Heart left ventricle (tissue), 16 donors: ENCODE measurements at regions of chr19 and their contacts with region 1.

Region 1: DNA sequence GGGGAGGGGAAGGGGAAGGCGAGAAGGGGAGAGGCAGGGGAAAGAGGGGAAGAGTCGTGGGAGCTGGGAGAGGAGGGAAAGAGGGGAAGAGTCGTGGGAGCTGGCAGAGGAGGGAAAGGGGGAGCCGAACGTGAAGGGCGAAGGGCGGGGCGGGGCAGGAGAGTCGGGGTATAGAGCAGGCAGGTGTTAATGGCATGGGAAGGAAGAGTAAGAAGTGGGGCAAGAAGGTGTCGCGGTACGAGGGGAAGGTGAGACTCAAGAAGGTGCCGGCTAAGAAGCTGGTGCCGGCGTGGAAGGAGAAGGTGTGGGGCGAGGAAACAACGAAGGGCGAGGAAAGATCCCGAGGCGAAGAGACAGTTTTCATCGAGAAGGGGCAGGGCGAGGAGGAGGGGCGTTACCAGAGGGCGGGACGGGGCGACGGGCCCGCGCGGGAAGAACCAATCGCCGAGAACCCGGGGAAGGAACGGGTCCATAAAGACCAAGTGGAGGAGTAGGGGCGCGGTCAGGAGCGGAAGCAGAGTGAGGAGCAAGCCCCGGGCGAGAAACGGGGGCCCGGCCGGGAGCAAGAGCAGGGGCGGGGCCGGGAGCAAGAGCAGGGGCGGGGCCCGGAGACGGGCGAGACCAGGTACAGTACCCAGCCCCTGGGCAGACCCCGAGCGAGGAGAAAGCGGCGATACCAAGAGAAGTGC is 463 bp downstream of the CATSPERG start:
- DNase-seq: peak; percentile 94 to 98 (median 97)
- ATAC-seq: peak; percentile 91 to 94 (median 92)
- H3K4me3 ChIP-seq: peak overlapping the region; percentile 35 to 94 (median 74)
- H3K27ac ChIP-seq: peak overlapping the region; percentile 85 to 98 (median 93)
- H3K4me1 ChIP-seq: peaks cover 0 to 12% (median 8%) of the 10 kb centered on the region in 12 donors
- H3K27me3 ChIP-seq: no peaks in the 10 kb centered on the region
- CTCF ChIP-seq: no peak
- POLR2A ChIP-seq: peak in 1 of 2 donors; percentile 36

Region 2: GRCh38 chr19:37906869-37907734 is 429.0 kb before region 1 on chr19 and contains the start of gene SIPA1L3:
- intact Hi-C with region 1: loop called in 7 of 10 experiments (anchors 5 to 10 kb)
- DNase-seq: peak; percentile 94 to 97 (median 95)
- ATAC-seq: peak; percentile 97 to 99 (median 99)
- H3K4me3 ChIP-seq: peak within 1 kb of the TSS; percentile 76 to 98 (median 88)
- H3K27ac ChIP-seq: peak within 1 kb of the TSS in 11 of 12 donors; percentile 47 to 81 (median 76)
- H3K4me1 ChIP-seq: peaks cover 0 to 19% (median 12%) of the 10 kb centered on the region in 12 donors
- H3K27me3 ChIP-seq: no peaks in the 10 kb centered on the region
- CTCF ChIP-seq: peak in 2 of 12 donors; percentile 18 to 25
- POLR2A ChIP-seq: peak in 1 of 2 donors; percentile 86
- total RNA-seq, gene SIPA1L3: 6.3 to 22.9 (median 9.4) TPM

Region 3: GRCh38 chr19:38142176-38143035 is 193.7 kb before region 1 on chr19:
- intact Hi-C with region 1: loop called in 4 of 10 experiments (anchors 5 to 10 kb)
- DNase-seq: peak; percentile 49 to 77 (median 63)
- ATAC-seq: peak; percentile 70 to 86 (median 74)
- H3K4me3 ChIP-seq: no peak overlapping the region
- H3K27ac ChIP-seq: no peak overlapping the region
- H3K4me1 ChIP-seq: no peaks in the 10 kb centered on the region
- H3K27me3 ChIP-seq: no peaks in the 10 kb centered on the region
- CTCF ChIP-seq: peak; percentile 48 to 75 (median 68)
- POLR2A ChIP-seq: no peak

Region 4: GRCh38 chr19:38239816-38240215 is 96.3 kb before region 1 on chr19:
- intact Hi-C with region 1: loop called in 9 of 10 experiments (anchors 1 to 5 kb)
- DNase-seq: no peak
- ATAC-seq: no peak
- H3K4me3 ChIP-seq: no peak overlapping the region
- H3K27ac ChIP-seq: peak overlapping the region in 2 of 12 donors; percentile 34 to 38
- H3K4me1 ChIP-seq: peaks cover 0 to 10% (median 5%) of the 10 kb centered on the region in 12 donors
- H3K27me3 ChIP-seq: no peaks in the 10 kb centered on the region
- CTCF ChIP-seq: no peak
- POLR2A ChIP-seq: no peak

Region 5: DNA sequence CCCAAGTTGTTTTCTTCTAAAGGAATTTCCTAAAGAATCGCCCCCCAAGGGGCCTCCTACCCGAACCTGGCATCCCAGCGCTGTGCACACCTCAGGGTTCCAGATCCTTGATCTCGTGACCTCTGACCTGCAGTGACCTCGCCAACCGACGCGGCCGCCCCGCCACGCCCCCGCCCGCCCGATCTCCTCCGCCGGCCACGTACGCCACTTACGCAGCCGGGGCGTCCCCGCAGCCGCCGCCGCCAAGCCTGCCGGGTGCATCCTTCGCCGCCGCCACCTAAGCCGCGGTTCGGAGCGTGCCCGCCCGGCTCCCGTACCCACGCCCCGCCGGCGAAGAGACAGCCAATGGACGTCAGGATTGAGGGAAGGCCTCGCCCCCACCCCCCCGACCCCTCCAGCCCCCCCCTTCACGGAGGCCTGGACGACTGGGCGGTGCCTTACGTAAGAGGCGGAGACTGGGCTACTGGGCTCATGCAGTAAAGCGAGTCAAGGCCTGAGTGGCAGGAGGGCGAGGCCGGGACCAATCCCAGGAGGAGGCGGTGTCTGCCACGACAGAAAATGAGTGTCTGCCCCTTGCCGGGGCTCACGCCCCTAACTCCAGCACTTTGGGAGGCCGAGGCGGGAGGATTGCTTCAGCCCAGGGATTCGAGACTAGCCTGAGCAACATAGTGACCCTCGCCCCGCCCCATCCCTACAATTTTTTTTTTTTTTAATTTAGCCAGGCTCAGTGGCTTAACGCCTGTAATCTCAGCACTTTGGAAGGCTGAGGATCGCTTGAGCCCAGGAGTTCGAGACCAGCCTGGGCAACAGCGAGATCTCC is 20.2 kb before region 1 on chr19 and contains the start of gene YIF1B:
- intact Hi-C with region 1: loop called in 1 of 10 experiments (anchors 1 kb)
- DNase-seq: peak; percentile 96 to 99 (median 98)
- ATAC-seq: peak; percentile 95 to 97 (median 96)
- H3K4me3 ChIP-seq: peak within 1 kb of the TSS; percentile 36 to 80 (median 68)
- H3K27ac ChIP-seq: peak within 1 kb of the TSS; percentile 49 to 94 (median 87)
- H3K4me1 ChIP-seq: peaks cover 0 to 69% (median 34%) of the 10 kb centered on the region in 12 donors
- H3K27me3 ChIP-seq: no peaks in the 10 kb centered on the region
- CTCF ChIP-seq: peak in 1 of 12 donors; percentile 17
- POLR2A ChIP-seq: peak in 1 of 2 donors; percentile 24
- total RNA-seq, gene YIF1B: 26.4 to 47.4 (median 31.9) TPM

Region 6: DNA sequence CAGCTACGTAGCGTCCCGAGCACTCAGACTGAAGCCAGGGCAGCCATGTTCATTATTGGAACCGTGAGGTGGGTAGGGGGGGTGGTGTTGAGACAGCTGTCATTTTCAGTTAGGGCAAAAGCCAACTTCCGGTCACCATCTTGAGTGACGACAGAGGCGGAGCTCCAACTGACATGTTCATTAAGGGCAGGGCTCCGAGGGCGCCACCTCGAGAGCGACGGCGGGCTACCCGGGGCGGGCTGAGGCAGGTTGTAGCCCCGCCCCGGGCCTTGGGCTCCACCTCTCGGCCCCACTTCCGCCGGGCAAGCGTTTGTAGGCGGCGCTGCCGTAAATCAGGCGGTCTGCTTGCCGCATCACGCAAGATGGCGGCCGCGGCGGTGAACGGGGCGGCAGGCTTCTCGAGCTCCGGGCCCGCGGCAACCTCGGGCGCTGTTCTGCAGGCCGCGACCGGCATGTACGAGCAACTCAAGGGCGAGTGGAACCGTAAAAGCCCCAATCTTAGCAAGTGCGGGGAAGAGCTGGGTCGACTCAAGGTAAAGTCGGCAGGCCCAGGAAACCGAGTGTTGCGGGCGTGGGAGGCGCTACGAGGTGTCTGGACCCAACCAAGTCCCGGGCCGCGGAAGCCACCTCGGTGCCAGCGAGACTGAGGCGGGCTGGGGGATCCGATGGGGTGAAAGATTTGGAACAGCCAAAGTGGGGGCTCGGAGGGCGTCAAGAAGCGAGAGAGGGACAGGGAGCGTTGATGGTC is 38.5 kb after region 1 on chr19 and contains the start of gene PSMD8:
- intact Hi-C with region 1: loop called in 9 of 10 experiments (anchors 1 to 5 kb)
- DNase-seq: peak; percentile 99 to 100 (median 99)
- ATAC-seq: peak; percentile 96 to 98 (median 98)
- H3K4me3 ChIP-seq: peak within 1 kb of the TSS; percentile 70 to 94 (median 88)
- H3K27ac ChIP-seq: peak within 1 kb of the TSS; percentile 78 to 97 (median 91)
- H3K4me1 ChIP-seq: peaks cover 7 to 29% (median 22%) of the 10 kb centered on the region in 12 donors
- H3K27me3 ChIP-seq: no peaks in the 10 kb centered on the region
- CTCF ChIP-seq: peak in 8 of 12 donors; percentile 15 to 61 (median 35)
- POLR2A ChIP-seq: peak; percentile 15 to 96
- total RNA-seq, gene PSMD8: 237 to 690 (median 325) TPM